CD8-positive, alpha-beta T cell (primary cell): ENCODE measurements at regions of chr7 and their contacts with region 1.

Region 1: DNA sequence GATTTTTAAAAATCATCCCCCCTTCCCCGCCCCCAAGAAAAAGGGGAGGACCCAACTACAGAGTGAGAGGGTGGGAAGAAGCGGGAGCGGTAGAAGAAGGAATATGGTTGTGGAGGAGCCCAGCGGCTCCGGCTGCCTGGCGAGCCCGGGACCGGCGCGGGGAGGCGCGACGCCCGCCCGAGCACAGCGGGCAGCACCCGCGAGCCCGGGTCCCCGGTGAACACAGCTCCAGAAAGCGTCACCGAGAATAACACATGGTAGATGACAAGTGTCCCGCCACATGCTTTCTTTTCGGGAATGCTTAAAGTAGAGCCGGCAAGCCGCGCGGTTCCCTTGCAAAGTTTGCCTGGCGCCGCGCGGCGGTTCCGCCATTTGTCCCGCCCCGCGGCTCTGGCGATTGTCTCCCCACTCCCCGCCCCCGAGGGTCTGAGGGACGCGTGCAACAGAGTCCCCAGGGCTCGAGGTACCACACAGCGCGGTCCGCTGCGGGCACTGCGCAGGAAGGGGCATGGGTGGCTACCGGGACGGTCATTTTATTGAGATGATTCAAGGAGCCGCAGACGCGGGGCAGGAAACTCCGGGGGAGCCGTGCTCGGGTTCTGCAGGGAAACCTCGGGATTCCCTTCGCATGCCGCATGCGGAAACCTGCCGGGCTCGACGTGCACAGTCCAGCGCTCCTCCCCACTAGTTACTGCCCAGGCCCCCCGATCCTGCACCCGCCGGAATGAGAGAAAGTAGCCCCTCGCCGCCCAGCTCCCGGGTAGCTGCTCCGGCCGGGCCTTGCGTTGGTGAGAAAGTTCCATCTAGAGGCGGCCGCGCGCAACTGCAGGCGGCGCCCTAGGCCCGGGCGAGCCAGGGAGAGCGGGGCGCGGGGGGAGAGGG is 781 bp upstream of the GRM8 start:
- DNase-seq: peak in 8 of 9 experiments; percentile 33 to 74 (median 57)
- ATAC-seq: peak; percentile 84
- H3K4me3 ChIP-seq: peak overlapping the region; percentile 75 to 76
- H3K4me3 Mint-ChIP-seq: peak overlapping the region; percentile 89
- H3K27ac ChIP-seq: no peak overlapping the region
- H3K27ac Mint-ChIP-seq: no peak overlapping the region
- H3K4me1 ChIP-seq: peaks cover 14% of the 10 kb centered on the region
- H3K4me1 Mint-ChIP-seq: peaks cover 25% of the 10 kb centered on the region
- H3K27me3 ChIP-seq: peaks cover 26 to 35% of the 10 kb centered on the region in 2 experiments
- H3K27me3 Mint-ChIP-seq: peaks cover 65% of the 10 kb centered on the region
- CTCF ChIP-seq: peak; percentile 87

Region 2: DNA sequence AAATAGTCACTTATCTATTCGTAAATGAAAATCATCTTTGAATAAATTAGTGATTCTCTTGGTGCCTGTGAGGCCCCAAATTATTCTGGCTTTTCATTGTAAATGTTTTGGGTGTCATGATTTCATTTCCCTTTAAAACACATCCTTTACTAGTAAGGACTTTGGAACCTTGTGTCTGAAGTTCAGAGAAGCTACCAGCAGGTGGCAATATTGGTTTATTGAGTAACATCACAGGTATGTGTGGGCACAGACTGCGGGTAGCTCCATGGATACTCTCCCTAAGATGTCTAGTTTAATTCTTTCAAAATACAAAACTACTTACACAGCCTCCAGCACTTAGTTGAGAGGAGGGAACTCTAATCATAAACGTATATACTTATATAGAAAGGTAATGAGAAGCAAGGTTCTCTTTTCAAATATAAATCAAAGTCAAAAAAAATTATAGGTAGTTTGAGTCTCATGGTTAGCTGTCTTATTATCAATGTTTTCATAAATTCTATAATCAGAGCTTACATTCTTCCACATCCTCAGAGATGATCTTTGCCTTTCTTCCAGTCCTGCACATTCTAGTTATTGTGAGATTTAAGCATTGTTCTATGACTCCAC is 450.4 kb before region 1 on chr7:
- CTCF ChIA-PET with region 1: interaction called, 10 read pairs
- POLR2A ChIA-PET with region 1: no interaction called
- intact Hi-C with region 1: no loop called
- DNase-seq: peak in 6 of 9 experiments; percentile 0 to 48 (median 16)
- ATAC-seq: no peak
- H3K4me3 ChIP-seq: no peak overlapping the region
- H3K4me3 Mint-ChIP-seq: no peak overlapping the region
- H3K27ac ChIP-seq: no peak overlapping the region
- H3K27ac Mint-ChIP-seq: no peak overlapping the region
- H3K4me1 ChIP-seq: no peaks in the 10 kb centered on the region
- H3K4me1 Mint-ChIP-seq: no peaks in the 10 kb centered on the region
- H3K27me3 ChIP-seq: no peaks in the 10 kb centered on the region
- H3K27me3 Mint-ChIP-seq: peaks cover 4% of the 10 kb centered on the region
- CTCF ChIP-seq: peak; percentile 49

Region 3: DNA sequence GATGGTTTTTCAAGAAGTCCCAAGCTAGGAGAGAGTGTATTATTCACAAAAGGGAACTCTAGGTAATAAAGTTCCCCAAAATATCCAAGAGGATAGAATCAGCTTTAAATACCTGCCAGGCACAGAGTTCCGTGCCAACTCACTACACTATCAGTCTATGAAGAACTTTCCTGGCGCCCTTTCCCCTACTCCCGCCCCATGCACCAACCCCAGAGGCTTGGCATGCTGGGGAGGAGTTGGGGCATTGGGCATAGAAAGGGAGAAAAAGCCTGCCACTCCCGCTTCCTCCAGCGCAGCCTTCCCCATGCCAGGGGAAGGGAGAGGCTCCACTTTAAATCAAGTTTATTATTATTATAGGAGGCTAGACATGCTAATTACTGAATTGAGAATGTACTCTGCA is 84.1 kb after region 1 on chr7:
- CTCF ChIA-PET with region 1: no interaction called
- POLR2A ChIA-PET with region 1: no interaction called
- intact Hi-C with region 1: loop called in 1 of 2 experiments (anchors 5 kb)
- DNase-seq: no peak
- ATAC-seq: no peak
- H3K4me3 ChIP-seq: no peak overlapping the region
- H3K4me3 Mint-ChIP-seq: no peak overlapping the region
- H3K27ac ChIP-seq: no peak overlapping the region
- H3K27ac Mint-ChIP-seq: no peak overlapping the region
- H3K4me1 ChIP-seq: no peaks in the 10 kb centered on the region
- H3K4me1 Mint-ChIP-seq: no peaks in the 10 kb centered on the region
- H3K27me3 ChIP-seq: peaks cover 3 to 5% of the 10 kb centered on the region in 2 experiments
- H3K27me3 Mint-ChIP-seq: peaks cover 28% of the 10 kb centered on the region
- CTCF ChIP-seq: no peak

Region 4: DNA sequence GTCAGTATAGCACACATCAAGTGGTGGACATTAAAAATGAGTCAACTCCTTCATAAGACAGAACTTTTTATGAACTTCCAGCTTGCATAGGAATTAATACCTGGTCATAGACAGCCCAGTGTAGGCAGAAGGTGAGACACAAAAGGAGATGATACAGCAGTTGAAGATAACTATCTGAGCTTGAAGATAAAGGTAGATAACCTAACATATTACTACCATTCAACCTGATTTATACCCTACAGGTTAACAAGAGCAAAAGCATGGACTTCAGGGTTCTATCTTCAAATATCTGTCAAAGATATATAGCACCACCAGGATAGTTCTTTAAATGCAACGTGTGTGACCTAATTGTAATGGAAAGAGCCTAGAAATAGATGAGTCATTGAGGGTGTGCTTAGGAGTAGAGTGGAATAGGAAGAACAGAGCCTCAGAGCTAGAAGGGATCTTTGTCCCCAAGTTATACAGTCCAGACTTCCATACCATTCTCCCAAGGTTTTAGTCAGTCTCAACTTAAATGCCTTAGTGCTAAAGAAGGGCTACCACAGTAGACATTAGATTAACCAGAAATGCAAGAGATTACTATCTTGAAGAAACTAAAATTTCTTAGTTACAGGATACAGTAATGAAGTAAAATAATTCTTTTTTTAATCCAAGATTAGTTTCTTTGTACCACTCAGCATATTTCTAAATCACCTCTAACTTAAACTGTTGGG is 129.8 kb after region 1 on chr7:
- CTCF ChIA-PET with region 1: no interaction called
- POLR2A ChIA-PET with region 1: no interaction called
- intact Hi-C with region 1: loop called in 1 of 2 experiments (anchors 10 kb)
- DNase-seq: no peak
- ATAC-seq: no peak
- H3K4me3 ChIP-seq: no peak overlapping the region
- H3K4me3 Mint-ChIP-seq: no peak overlapping the region
- H3K27ac ChIP-seq: no peak overlapping the region
- H3K27ac Mint-ChIP-seq: peak overlapping the region; percentile 45
- H3K4me1 ChIP-seq: peaks cover 51% of the 10 kb centered on the region
- H3K4me1 Mint-ChIP-seq: peaks cover 78% of the 10 kb centered on the region
- H3K27me3 ChIP-seq: no peaks in the 10 kb centered on the region
- H3K27me3 Mint-ChIP-seq: no peaks in the 10 kb centered on the region
- CTCF ChIP-seq: no peak

Region 5: DNA sequence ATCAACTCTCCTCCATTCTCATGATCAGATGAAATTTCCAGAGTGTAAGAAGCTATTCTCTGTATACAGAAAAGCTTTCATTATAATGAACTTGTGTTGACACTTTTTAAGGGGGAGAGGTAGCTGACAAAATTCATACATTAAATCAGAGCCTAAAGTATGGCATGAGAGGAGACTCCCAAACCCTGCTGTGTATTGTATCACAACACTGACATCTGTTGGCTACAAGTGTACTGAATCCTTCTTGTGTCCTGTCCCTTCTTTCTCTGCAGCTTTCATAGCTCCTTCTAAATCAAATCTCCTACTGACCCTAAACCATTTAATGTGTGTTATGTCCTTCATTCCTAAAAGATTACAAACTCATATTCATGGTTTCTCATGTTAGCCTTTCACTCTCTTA is 261.0 kb after region 1 on chr7:
- CTCF ChIA-PET with region 1: interaction called, 5 read pairs
- POLR2A ChIA-PET with region 1: no interaction called
- intact Hi-C with region 1: loop called in 1 of 2 experiments (anchors 5 kb)
- DNase-seq: peak in 3 of 9 experiments; percentile 5 to 70 (median 55)
- ATAC-seq: peak; percentile 57
- H3K4me3 ChIP-seq: no peak overlapping the region
- H3K4me3 Mint-ChIP-seq: no peak overlapping the region
- H3K27ac ChIP-seq: no peak overlapping the region
- H3K27ac Mint-ChIP-seq: no peak overlapping the region
- H3K4me1 ChIP-seq: no peaks in the 10 kb centered on the region
- H3K4me1 Mint-ChIP-seq: no peaks in the 10 kb centered on the region
- H3K27me3 ChIP-seq: no peaks in the 10 kb centered on the region
- H3K27me3 Mint-ChIP-seq: peaks cover 17% of the 10 kb centered on the region
- CTCF ChIP-seq: peak; percentile 62